ENCODE measurements at regions of chr19 and their contacts with region 1.

Region 1: DNA sequence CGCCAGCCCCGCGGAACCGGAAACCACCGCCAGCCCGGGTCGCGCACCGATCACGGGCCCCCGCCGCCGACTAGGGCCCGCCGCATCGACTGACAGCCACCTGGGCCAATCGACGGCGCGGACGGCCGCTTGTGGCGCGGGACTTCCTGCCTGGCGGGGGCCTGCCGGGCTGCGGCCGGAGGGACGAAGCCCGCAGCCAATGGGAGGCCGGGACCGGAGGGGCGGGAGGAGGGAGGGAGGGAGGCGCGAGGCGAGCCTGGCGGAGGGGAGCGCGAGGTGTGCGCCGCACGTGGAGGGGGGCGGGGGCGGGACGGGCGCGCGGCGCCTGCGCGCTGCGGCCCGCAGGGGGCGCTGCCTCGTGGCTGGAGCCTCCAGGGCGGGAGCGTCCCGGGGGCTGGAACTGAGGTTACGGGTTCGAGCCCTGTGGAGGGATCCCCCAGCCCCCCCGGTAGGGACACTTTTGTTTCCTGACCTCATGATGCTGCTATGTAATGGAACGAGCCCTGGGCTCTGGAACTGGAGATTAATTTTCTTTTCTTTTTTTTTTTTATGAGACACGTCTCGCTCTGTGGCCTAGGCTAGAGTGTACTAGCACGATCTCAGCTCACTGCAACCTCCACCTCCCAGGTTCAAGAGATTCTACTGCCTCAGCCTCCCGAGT is at the start of gene MLLT1:
- DNase-seq: peak; percentile 97
- H3K4me3 ChIP-seq: peak within 1 kb of the TSS; percentile 86
- CTCF ChIP-seq: peak; percentile 42

Region 2: DNA sequence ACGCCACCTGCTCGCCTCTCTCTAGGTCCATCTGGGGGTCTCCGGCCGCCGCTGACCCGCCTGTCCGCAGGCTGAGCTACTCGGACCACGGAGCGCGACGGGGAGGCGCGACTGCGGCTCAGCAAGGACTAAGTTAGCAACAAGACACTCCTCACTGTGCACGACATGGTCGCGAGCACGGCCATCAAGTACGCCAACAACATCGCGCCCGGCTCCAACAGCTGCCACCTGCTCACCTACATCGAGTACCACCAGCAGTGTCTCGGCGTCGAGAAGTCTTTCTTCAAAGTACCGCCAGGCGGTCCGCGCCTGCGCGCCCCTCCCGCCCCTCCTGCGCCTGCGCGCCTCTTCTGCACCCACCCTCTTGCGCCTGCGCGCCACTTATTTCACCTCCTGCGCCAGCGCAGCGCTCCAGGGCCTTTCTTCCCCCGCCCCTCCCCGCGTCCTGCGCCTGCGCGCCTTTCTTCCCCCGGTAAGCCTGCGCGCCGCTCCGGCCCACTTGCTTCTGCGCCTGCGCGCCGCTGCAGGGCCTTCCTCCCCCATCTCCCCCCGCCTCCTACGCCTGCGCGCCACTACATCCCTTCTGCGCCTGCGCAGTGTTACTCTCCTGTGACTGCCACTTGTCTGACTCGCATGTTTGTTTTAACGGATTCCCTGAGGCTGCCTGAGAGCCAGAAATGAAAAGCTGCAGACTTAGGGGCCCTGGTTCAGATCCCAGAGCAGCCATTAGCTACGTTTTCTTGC is 80.6 kb before region 1 on chr19:
- in situ Hi-C with region 1: no loop called
- DNase-seq: peak; percentile 99
- H3K4me3 ChIP-seq: peak overlapping the region; percentile 73
- CTCF ChIP-seq: peak; percentile 34

Region 3: GRCh38 chr19:6220418-6221221 is 59.4 kb before region 1 on chr19:
- in situ Hi-C with region 1: loop called (anchors 10 kb)
- DNase-seq: no peak
- H3K4me3 ChIP-seq: no peak overlapping the region
- CTCF ChIP-seq: no peak

Measured in astrocyte of the spinal cord (primary cell).